ENCODE measurements at regions of chr4 and their contacts with region 1.

Region 1: GRCh38 chr4:139167774-139168444 is 9.1 kb downstream of the ELF2 start:
- DNase-seq: no peak
- ATAC-seq: peak; percentile 45 to 72
- H3K4me3 ChIP-seq: no peak overlapping the region
- H3K27ac ChIP-seq: no peak overlapping the region
- H3K4me1 ChIP-seq: peaks cover 4% of the 10 kb centered on the region
- H3K27me3 ChIP-seq: no peaks in the 10 kb centered on the region

Region 2: DNA sequence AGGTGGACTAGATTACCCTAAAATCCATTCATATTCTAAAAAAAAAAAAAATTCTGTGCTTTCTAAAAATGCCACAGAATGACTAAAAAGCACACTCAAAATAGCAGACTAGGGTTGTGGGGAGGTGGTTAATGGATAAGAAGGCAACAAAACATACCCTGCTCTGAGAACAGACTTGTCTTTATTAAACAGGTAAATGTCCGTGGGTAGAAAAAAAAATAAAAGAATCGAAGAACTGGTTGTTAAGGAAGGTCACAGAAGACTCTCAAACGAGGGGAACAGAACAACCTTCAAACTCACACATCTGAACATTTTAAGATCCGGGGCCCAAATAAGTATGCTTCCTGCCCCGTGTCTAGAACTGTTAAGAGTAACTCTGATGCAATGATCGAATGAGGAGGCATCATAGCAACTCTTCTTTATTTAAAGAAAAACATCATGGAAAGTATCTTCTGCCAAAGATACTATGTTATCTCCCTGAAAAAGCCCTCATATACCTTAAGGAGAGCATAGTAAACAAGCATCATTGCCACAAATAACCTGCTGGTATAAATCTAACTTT is 59.3 kb before region 1 on chr4:
- intact Hi-C with region 1: loop called in 2 of 4 experiments (anchors 10 kb)
- DNase-seq: no peak
- ATAC-seq: no peak
- H3K4me3 ChIP-seq: no peak overlapping the region
- H3K27ac ChIP-seq: no peak overlapping the region
- H3K4me1 ChIP-seq: no peaks in the 10 kb centered on the region
- H3K27me3 ChIP-seq: no peaks in the 10 kb centered on the region

Region 3: DNA sequence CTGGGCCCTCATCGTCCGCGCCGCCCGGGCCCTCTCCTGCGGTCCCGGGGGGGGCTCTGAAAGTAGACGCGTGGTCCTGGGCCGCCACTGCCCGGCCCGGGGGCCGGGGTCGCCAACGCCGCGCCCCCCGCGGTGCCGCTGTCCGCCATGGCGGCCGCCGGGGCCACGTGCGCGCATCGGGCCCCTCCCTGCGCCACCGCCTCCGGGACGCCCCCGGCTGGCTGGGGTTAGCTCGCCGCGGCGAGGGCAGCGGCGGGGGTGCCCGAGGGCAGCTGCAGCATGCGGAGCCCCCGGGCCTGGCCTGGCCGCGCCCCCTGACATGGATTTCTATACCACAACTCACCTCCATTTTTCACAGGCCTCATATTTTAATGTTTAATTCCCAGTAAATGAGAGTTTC is 52.7 kb before region 1 on chr4:
- intact Hi-C with region 1: loop called in 1 of 4 experiments (anchors 10 kb)
- DNase-seq: peak in 2 of 3 donors; percentile 29 to 34
- ATAC-seq: no peak
- H3K4me3 ChIP-seq: no peak overlapping the region
- H3K27ac ChIP-seq: no peak overlapping the region
- H3K4me1 ChIP-seq: no peaks in the 10 kb centered on the region
- H3K27me3 ChIP-seq: no peaks in the 10 kb centered on the region